Heart left ventricle (tissue), 16 donors: ENCODE measurements at regions of chr17 and their contacts with region 1.

Region 1: DNA sequence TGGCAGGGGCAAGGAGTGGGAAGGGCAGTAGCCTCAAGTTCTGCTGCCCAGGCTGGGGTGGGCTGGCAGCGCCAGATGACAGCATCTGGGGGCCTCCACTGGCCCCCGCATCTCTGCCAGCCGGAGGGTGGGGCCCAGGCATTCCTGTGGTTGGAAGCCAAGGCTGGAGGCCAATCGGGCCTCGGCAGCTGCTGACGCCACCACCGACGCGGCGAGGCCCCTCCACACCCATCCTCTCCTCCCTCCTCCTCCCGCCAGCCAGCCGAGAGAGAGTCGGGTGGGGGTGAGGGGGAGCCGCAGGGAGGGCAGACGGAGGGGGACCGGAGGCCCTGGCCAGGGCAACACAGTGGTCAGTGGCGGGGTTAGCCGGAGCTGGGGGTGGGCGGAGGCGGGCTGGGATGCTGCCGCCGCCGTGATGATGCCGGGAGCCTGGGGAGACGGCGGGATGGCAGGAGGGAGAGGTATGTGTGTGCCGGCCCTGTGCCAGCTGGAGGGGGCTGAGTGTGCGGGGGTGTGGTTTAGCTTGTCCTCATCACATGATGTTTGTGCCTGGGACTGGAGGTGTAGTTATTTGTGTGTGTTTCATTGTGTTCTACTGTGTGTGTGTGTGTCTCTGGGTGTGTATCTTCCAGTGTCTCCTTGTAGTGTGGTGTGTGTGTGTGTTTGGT is 36.6 kb downstream of the ARHGAP23 start:
- DNase-seq: peak; percentile 91 to 94 (median 92)
- ATAC-seq: peak; percentile 77 to 89 (median 88)
- H3K4me3 ChIP-seq: peak overlapping the region in 11 of 12 donors; percentile 21 to 63 (median 50)
- H3K27ac ChIP-seq: peak overlapping the region; percentile 87 to 99 (median 95)
- H3K4me1 ChIP-seq: peaks cover 5 to 94% (median 59%) of the 10 kb centered on the region in 12 donors
- H3K27me3 ChIP-seq: no peaks in the 10 kb centered on the region
- CTCF ChIP-seq: no peak
- POLR2A ChIP-seq: no peak

Region 2: GRCh38 chr17:38428112-38428642 is 36.7 kb before region 1 on chr17 and contains the start of gene ARHGAP23:
- intact Hi-C with region 1: loop called in 2 of 10 experiments (anchors 5 kb)
- DNase-seq: peak; percentile 78 to 89 (median 86)
- ATAC-seq: peak; percentile 55 to 78 (median 74)
- H3K4me3 ChIP-seq: peak within 1 kb of the TSS; percentile 72 to 98 (median 94)
- H3K27ac ChIP-seq: peak within 1 kb of the TSS; percentile 89 to 99 (median 96)
- H3K4me1 ChIP-seq: peaks cover 9 to 87% (median 53%) of the 10 kb centered on the region in 12 donors
- H3K27me3 ChIP-seq: no peaks in the 10 kb centered on the region
- CTCF ChIP-seq: no peak
- POLR2A ChIP-seq: peak in 1 of 2 donors; percentile 50
- total RNA-seq, gene ARHGAP23: 28.0 to 72.3 (median 66.3) TPM

Region 3: DNA sequence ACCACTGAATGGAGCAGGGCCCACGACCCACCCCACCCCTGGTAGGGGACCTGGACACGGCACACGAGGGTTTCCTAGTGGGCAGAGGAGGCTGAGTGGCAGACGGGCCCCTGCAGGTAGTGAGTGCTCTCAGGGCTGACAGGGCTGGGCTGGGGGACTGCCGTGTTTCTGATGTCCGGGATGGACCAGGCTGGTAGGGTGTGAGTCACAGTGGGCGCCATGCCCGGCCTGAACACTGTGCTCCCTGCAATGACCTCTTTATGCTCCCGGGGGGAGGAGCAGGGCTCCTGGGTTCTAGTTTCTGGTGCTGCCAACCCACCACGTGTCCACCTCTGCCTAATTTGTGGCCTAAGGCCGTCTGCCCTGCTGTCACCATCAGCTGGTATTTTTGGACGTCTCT is 10.3 kb before region 1 on chr17:
- intact Hi-C with region 1: loop called in 2 of 10 experiments (anchors 1 to 2 kb)
- DNase-seq: peak; percentile 88 to 95 (median 90)
- ATAC-seq: peak; percentile 83 to 87 (median 86)
- H3K4me3 ChIP-seq: peak overlapping the region in 11 of 12 donors; percentile 38 to 64 (median 54)
- H3K27ac ChIP-seq: peak overlapping the region; percentile 49 to 95 (median 88)
- H3K4me1 ChIP-seq: peaks cover 15 to 96% (median 75%) of the 10 kb centered on the region in 12 donors
- H3K27me3 ChIP-seq: peaks cover 0 to 16% (median 0%) of the 10 kb centered on the region in 9 donors
- CTCF ChIP-seq: no peak
- POLR2A ChIP-seq: peak in 1 of 2 donors; percentile 29